Transverse colon (tissue), 4 donors: ENCODE measurements at regions of chr3 and their contacts with region 1.

Region 1: GRCh38 chr3:45507820-45508317 is 86.7 kb upstream of the LIMD1 start:
- DNase-seq: no peak
- H3K4me3 ChIP-seq: no peak overlapping the region
- H3K27ac ChIP-seq: peak overlapping the region in 3 of 4 donors; percentile 35 to 48 (median 40)
- H3K4me1 ChIP-seq: no peaks in the 10 kb centered on the region
- H3K27me3 ChIP-seq: no peaks in the 10 kb centered on the region
- CTCF ChIP-seq: no peak
- EP300 ChIP-seq: no peak
- POLR2A ChIP-seq: no peak

Region 2: GRCh38 chr3:45037734-45038455 is 470.0 kb before region 1 on chr3:
- in situ Hi-C with region 1: loop called in 1 of 4 experiments (anchors 5 kb)
- intact Hi-C with region 1: no loop called
- DNase-seq: peak; percentile 95
- H3K4me3 ChIP-seq: peak overlapping the region in 1 of 4 donors; percentile 13
- H3K27ac ChIP-seq: peak overlapping the region in 1 of 4 donors; percentile 33
- H3K4me1 ChIP-seq: peaks cover 14 to 39% (median 25%) of the 10 kb centered on the region in 4 donors
- H3K27me3 ChIP-seq: no peaks in the 10 kb centered on the region
- CTCF ChIP-seq: peak; percentile 87 to 99 (median 91)
- EP300 ChIP-seq: no peak
- POLR2A ChIP-seq: no peak

Region 3: GRCh38 chr3:45224824-45225464 is 282.9 kb before region 1 on chr3:
- in situ Hi-C with region 1: loop called in 1 of 4 experiments (anchors 10 kb)
- intact Hi-C with region 1: no loop called
- DNase-seq: peak; percentile 74
- H3K4me3 ChIP-seq: peak overlapping the region; percentile 23 to 70 (median 61)
- H3K27ac ChIP-seq: peak overlapping the region in 3 of 4 donors; percentile 7 to 38 (median 7)
- H3K4me1 ChIP-seq: peaks cover 0 to 17% (median 9%) of the 10 kb centered on the region in 4 donors
- H3K27me3 ChIP-seq: peaks cover 60% of the 10 kb centered on the region
- CTCF ChIP-seq: peak; percentile 24 to 39 (median 32)
- EP300 ChIP-seq: no peak
- POLR2A ChIP-seq: no peak

Region 4: DNA sequence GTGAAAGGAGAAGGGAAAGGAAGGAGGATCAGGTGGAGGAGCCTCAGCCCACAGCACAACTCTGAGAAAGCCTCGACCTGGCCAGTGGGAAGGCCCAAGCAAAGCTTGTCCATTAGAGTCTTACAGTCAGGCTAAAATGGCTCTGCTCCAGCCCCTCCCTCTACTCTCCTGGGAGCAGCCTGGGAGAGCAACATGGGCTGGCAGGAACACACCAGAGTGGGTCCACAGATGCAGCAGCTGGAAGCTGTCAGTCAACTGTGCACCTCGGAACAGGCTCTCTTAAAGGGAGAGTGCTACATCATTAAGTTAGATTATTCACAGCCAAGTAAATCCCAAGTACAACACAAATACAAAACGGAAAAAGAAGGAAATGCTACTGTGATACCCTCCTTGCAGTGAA is 11.3 kb before region 1 on chr3:
- in situ Hi-C with region 1: no loop called
- intact Hi-C with region 1: no loop called
- DNase-seq: no peak
- H3K4me3 ChIP-seq: no peak overlapping the region
- H3K27ac ChIP-seq: no peak overlapping the region
- H3K4me1 ChIP-seq: no peaks in the 10 kb centered on the region
- H3K27me3 ChIP-seq: no peaks in the 10 kb centered on the region
- CTCF ChIP-seq: no peak
- EP300 ChIP-seq: no peak
- POLR2A ChIP-seq: no peak